ENCODE measurements at regions of chr1 and their contacts with region 1.

Region 1: GRCh38 chr1:28409090-28409489 is 39.5 kb downstream of the PHACTR4 start:
- DNase-seq: no peak
- ATAC-seq: no peak
- H3K4me3 ChIP-seq: no peak overlapping the region
- H3K27ac ChIP-seq: no peak overlapping the region
- H3K4me1 ChIP-seq: peaks cover 0 to 13% (median 0%) of the 10 kb centered on the region in 12 donors
- H3K27me3 ChIP-seq: no peaks in the 10 kb centered on the region
- CTCF ChIP-seq: no peak
- POLR2A ChIP-seq: no peak

Region 2: DNA sequence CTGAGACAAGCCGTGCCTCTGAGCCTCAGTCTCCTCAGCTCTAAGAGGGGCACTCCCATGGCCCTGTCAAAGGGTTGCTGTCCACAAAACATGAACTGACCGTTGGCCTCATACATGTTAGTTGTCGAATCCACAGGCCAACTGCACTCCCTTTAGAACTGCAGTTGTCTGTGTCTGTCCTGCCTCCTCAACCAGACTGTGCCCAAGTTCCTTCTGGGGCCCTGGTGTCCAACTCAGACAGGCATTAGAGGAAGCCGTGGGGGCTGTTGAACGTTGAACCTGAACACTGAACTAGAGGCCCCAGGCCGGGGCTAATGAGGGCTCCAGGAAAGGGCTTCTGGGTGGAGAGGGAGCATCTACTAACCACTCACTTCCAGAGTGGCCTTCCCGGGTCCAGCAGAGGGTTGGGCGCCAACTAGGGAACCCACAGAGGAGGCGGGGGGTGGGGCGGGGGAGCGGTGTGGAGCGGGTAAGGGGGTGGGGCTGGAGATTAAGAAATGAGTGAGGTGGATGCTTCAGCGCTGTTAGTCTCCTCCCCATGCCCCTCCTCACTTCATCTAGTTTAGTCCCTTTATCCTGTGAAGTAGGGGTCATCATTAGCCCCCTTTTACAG is 182.7 kb after region 1 on chr1 and contains the start of gene RAB42:
- intact Hi-C with region 1: loop called in 1 of 10 experiments (anchors 10 kb)
- DNase-seq: peak in 4 of 5 donors; percentile 30 to 53 (median 46)
- ATAC-seq: peak; percentile 26 to 78 (median 58)
- H3K4me3 ChIP-seq: peak within 1 kb of the TSS; percentile 29 to 69 (median 56)
- H3K27ac ChIP-seq: peak within 1 kb of the TSS in 4 of 12 donors; percentile 0 to 82 (median 42)
- H3K4me1 ChIP-seq: peaks cover 0 to 25% (median 4%) of the 10 kb centered on the region in 12 donors
- H3K27me3 ChIP-seq: no peaks in the 10 kb centered on the region
- CTCF ChIP-seq: no peak
- POLR2A ChIP-seq: no peak
- total RNA-seq, gene RAB42: 0.49 to 13.1 (median 1.2) TPM

Region 3: GRCh38 chr1:28971980-28972771 is 563.1 kb after region 1 on chr1:
- intact Hi-C with region 1: no loop called
- DNase-seq: no peak
- ATAC-seq: no peak
- H3K4me3 ChIP-seq: no peak overlapping the region
- H3K27ac ChIP-seq: no peak overlapping the region
- H3K4me1 ChIP-seq: peaks cover 0 to 12% (median 0%) of the 10 kb centered on the region in 12 donors
- H3K27me3 ChIP-seq: no peaks in the 10 kb centered on the region
- CTCF ChIP-seq: no peak
- POLR2A ChIP-seq: no peak

Region 4: GRCh38 chr1:29033829-29034466 is 624.9 kb after region 1 on chr1:
- intact Hi-C with region 1: no loop called
- DNase-seq: no peak
- ATAC-seq: peak in 2 of 4 donors; percentile 46 to 55
- H3K4me3 ChIP-seq: no peak overlapping the region
- H3K27ac ChIP-seq: no peak overlapping the region
- H3K4me1 ChIP-seq: peaks cover 0 to 6% (median 0%) of the 10 kb centered on the region in 12 donors
- H3K27me3 ChIP-seq: no peaks in the 10 kb centered on the region
- CTCF ChIP-seq: peak; percentile 49 to 78 (median 66)
- POLR2A ChIP-seq: no peak